Activated T-helper 1 cell treated with anti-CD3 and anti-CD28 coated beads, Interleukin-12 subunit alpha, Interleukin-12 subunit beta, Interleukin-2, Interleukin-4 antibody, amounts not matched to agents 30 ng/mL and 10 ng/mL and 1 ng/mL, durations not matched to agents 14 hours and 24 hours and 36 hours (primary cell): ENCODE measurements at regions of chr11 and their contacts with region 1.

Region 1: GRCh38 chr11:10878408-10879214 is 20.8 kb upstream of the ZBED5 start:
- DNase-seq: peak; percentile 17
- H3K4me3 Mint-ChIP-seq: no peak overlapping the region
- H3K27ac Mint-ChIP-seq: no peak overlapping the region
- H3K4me1 Mint-ChIP-seq: peaks cover 7% of the 10 kb centered on the region
- H3K27me3 Mint-ChIP-seq: no peaks in the 10 kb centered on the region

Region 2: GRCh38 chr11:10857709-10858438 is 20.7 kb before region 1 on chr11 and contains the start of gene ZBED5:
- intact Hi-C with region 1: loop called (anchors 2 kb)
- DNase-seq: peak; percentile 94
- H3K4me3 Mint-ChIP-seq: peak within 1 kb of the TSS; percentile 100
- H3K27ac Mint-ChIP-seq: peak within 1 kb of the TSS; percentile 100
- H3K4me1 Mint-ChIP-seq: peaks cover 46% of the 10 kb centered on the region
- H3K27me3 Mint-ChIP-seq: no peaks in the 10 kb centered on the region
- total RNA-seq, gene ZBED5: 38.9 and 42.2 TPM in 2 replicates

Region 3: GRCh38 chr11:11567936-11568650 is 689.5 kb after region 1 on chr11:
- intact Hi-C with region 1: no loop called
- DNase-seq: no peak
- H3K4me3 Mint-ChIP-seq: no peak overlapping the region
- H3K27ac Mint-ChIP-seq: peak overlapping the region; percentile 57
- H3K4me1 Mint-ChIP-seq: peaks cover 30% of the 10 kb centered on the region
- H3K27me3 Mint-ChIP-seq: no peaks in the 10 kb centered on the region